Right ventricle myocardium inferior (tissue), 1 donor: ENCODE measurements at regions of chr6 and their contacts with region 1.

Region 1: DNA sequence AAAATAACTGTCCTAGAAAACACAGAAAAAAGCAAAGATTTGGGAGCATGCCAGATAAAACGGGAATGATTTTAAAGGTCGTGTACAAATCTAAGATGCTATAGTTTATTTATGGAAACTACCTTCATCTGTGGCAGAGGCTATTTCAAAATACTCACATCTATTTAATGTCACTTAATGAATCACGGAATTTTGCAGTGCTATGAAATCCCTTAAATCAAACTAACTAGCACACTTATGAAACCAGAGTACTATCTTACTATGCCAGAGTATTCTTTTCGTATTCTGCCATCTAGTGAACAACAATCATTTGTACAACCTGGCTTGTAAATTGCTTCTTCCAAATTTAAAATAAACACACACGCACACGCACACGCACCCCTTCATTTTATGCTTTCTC is 77.9 kb upstream of the BMP5 start:
- DNase-seq: no peak
- ATAC-seq: peak; percentile 75

Region 2: DNA sequence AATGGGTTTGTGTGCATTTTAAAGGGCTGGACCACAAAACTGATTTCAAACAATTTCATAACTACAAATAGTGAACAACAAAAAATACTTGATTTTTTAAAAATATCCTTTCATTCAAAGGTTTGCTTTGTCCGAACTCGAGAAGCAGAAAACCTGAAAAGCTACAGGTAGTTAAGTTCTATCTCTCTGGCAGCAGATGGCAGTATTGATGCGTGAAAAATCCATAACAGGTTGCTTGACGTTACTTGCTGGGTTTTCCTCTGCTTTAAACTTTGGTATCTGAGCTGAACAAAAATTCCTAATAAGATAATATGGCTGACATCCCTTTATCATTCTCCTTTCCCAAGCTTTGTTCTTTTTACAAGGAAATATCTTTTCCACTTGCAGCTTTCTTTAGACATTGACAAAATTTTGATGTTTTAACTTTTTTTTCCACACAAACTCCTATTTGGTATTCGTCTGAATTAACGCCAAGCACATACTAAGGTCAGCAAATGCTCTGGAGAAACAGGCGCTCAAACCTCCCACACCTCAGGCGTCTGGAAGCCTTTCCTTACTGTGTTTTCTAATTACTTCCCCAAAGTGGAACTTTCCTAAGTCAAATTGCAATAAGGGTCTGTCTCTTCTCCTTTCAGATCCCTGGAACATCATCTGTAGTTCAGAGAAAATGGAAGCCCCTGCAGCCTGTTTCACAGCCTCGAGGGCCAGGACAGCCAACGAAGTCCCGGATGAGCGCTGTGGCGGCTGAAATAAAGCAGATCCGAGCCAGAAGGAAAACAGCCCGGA is 676.4 kb before region 1 on chr6:
- intact Hi-C with region 1: loop called (anchors 2 kb)
- DNase-seq: peak; percentile 68
- ATAC-seq: peak; percentile 81

Region 3: DNA sequence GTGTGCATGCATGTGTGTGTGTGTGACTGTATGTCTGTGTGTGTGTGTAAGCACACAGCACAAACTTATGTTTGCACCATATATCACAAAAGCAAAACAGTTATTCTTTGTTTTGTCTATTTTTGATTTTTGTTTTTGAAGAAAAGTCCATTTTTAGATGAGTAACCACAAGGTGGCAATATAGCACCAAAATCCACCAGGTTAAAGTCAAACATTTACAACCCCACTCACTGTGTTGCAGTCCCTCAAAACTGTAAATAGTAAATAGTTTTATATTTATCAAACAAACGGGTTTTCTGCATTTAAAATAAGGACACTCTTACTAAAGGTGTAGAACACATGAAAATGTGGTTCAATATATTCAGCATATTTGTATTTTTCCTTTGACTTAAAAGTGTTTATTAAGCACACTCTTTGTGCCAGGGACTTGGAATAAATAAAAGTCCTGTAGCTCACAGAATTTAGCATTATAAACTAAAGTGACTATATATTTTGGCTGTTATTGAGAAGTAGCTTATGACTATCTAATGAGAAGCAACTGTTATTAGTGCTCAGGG is 507.6 kb before region 1 on chr6:
- intact Hi-C with region 1: loop called (anchors 2 kb)
- DNase-seq: no peak
- ATAC-seq: no peak

Region 4: DNA sequence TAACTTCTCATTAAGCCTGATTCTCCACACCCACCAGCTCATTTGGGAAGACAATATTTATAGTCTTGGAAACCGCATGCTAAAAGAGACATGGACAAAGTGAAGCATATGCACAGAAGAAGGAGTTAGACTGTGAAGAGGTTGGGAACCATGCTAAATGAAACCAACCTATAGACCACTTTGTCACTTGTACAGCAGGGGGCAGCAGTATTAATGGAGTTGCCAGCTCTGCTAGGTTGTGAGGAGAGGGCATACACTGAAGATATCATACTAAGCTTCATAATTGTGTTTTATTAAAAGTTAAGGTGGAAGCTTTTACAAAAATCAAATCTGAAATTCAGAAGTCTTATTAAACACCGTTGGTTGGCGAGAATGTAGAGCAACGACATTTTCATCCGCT is 336.1 kb before region 1 on chr6:
- intact Hi-C with region 1: loop called (anchors 10 kb)
- DNase-seq: no peak
- ATAC-seq: no peak